ENCODE measurements at regions of chr11 and their contacts with region 1.

Region 1: DNA sequence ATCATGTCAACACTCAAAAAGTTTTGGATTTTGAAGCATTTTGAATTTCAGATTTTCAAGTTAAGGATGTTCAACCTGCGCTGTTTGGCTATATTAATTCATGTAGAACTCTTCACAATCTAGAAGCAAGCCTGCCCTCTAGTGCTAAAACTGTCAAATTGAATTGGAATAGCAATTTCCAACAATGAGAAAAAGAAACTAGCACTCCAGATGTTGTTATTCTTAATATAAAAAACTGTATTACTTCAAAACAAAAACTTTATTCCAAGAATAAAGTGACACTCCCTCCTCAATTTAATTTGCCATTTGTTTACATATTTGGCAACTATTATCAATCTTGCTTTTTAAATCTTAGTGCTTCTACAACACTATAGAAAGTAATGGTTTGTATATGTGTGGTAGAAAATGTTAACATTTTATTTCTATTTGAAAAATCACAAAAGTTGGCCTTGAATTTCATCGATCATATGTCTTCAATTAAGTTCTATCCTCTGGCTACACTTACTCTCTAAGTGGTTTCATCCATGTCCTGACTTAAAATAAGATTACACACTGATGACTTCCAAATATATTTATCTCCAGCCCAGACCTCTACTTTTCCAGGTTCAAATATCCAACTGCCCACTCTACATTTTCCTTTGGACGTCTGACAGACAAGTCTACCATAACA is 36.6 kb downstream of the DCUN1D5 start:
- DNase-seq: no peak
- ATAC-seq: peak; percentile 68
- H3K4me3 Mint-ChIP-seq: no peak overlapping the region
- H3K27ac Mint-ChIP-seq: no peak overlapping the region
- H3K4me1 Mint-ChIP-seq: peaks cover 4% of the 10 kb centered on the region
- H3K27me3 Mint-ChIP-seq: no peaks in the 10 kb centered on the region
- CTCF ChIP-seq: peak; percentile 40

Region 2: GRCh38 chr11:102868339-102868738 is 187.0 kb before region 1 on chr11:
- CTCF ChIA-PET with region 1: no interaction called
- POLR2A ChIA-PET with region 1: no interaction called
- intact Hi-C with region 1: no loop called
- DNase-seq: no peak
- ATAC-seq: no peak
- H3K4me3 Mint-ChIP-seq: no peak overlapping the region
- H3K27ac Mint-ChIP-seq: no peak overlapping the region
- H3K4me1 Mint-ChIP-seq: no peaks in the 10 kb centered on the region
- H3K27me3 Mint-ChIP-seq: peaks cover 2% of the 10 kb centered on the region
- CTCF ChIP-seq: no peak

Region 3: DNA sequence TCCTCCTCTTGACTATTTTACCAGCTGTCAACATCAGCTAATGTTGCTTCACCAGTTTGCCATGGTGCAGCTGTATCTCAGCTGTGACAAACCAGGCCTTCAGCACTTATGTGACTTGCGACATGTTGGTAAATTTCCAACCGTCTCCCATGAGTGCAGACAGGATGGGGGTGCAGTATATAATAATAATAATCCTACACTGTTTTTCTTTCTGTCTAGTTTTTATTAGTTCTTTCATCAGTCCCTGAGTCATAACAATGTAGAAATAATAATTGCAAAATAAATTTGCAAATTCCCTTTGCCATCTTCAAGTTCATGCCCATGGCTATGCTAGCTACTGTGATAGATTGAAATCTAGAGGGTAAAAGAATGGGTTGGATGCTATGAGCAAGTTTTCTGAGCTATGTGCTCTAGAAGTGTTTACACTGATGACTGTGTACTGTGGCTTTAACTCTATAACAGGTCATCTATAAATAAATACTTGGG is 104.7 kb before region 1 on chr11:
- CTCF ChIA-PET with region 1: no interaction called
- POLR2A ChIA-PET with region 1: no interaction called
- intact Hi-C with region 1: no loop called
- DNase-seq: no peak
- ATAC-seq: no peak
- H3K4me3 Mint-ChIP-seq: no peak overlapping the region
- H3K27ac Mint-ChIP-seq: no peak overlapping the region
- H3K4me1 Mint-ChIP-seq: no peaks in the 10 kb centered on the region
- H3K27me3 Mint-ChIP-seq: peaks cover 2% of the 10 kb centered on the region
- CTCF ChIP-seq: no peak

Region 4: DNA sequence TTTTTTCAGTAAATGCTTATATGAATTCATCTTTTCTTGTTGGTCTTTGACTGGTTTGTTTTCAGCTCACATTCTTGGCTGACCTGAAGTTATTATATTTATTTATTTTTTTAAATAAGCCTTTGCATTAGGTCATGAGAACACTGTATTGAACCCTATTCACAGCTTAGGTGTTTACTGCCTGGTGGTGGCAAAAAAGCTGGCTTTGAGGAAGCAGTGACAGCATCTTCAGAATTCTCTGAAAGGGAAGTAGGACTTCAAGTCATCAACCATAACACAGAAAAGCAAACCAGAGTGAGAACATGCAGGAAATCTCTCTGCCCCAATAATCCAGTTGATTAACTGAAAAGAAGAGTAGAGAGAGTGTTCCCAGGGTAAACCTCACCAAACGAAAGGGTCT is 69.5 kb before region 1 on chr11:
- CTCF ChIA-PET with region 1: no interaction called
- POLR2A ChIA-PET with region 1: no interaction called
- intact Hi-C with region 1: no loop called
- DNase-seq: no peak
- ATAC-seq: no peak
- H3K4me3 Mint-ChIP-seq: no peak overlapping the region
- H3K27ac Mint-ChIP-seq: no peak overlapping the region
- H3K4me1 Mint-ChIP-seq: peaks cover 5% of the 10 kb centered on the region
- H3K27me3 Mint-ChIP-seq: peaks cover 8% of the 10 kb centered on the region
- CTCF ChIP-seq: no peak

Region 5: GRCh38 chr11:103035791-103036434 is 19.4 kb before region 1 on chr11:
- CTCF ChIA-PET with region 1: interaction called, 16 read pairs
- POLR2A ChIA-PET with region 1: interaction called, 3 read pairs
- intact Hi-C with region 1: loop called (anchors 1 kb)
- DNase-seq: peak; percentile 65
- ATAC-seq: peak; percentile 92
- H3K4me3 Mint-ChIP-seq: peak overlapping the region; percentile 39
- H3K27ac Mint-ChIP-seq: peak overlapping the region; percentile 85
- H3K4me1 Mint-ChIP-seq: peaks cover 22% of the 10 kb centered on the region
- H3K27me3 Mint-ChIP-seq: no peaks in the 10 kb centered on the region
- CTCF ChIP-seq: peak; percentile 74